ENCODE measurements at regions of chr1 and their contacts with region 1.

Region 1: DNA sequence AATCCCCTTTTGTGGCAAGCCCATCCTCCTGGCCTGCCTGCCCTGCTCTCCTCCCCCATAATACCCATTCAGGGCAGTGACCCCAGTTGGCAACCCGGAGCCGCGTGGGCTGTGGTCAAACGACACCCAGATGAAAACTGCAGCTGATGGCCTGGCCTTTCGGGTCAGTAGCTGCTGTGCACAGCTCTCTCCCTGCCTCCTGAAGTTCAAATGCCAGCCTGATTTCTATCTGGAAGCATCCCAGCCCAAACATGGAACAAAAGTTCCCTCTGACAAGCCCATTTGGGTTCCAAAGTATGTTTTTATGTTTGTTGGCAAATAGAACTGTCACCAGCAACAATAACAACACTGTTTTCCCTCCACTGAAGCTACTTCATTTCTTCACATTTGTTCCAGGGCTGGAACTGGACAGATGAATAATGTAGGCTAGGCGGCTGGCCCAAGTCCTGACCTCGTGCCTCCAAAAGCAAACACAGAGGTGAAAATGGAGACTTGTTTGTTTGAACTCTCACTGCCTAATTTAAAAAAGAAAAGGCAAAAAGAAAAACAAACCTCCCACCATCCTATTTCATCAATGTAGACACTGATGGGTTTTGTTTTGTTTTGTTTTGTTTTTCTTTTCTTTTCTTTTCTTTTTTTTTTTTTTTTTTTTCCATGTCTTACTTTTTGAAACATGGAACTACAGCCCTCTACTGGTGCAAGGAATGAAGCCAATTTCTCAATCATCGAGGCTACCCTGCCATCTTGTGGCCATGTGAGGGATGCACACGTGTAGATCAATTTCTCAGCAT is 179.0 kb downstream of the ADSS2 start:
- DNase-seq: peak; percentile 87
- ATAC-seq: peak; percentile 98
- H3K4me3 ChIP-seq: no peak overlapping the region
- H3K4me3 Mint-ChIP-seq: no peak overlapping the region
- H3K27ac ChIP-seq: no peak overlapping the region
- H3K27ac Mint-ChIP-seq: no peak overlapping the region
- H3K4me1 ChIP-seq: peaks cover 7 to 10% of the 10 kb centered on the region in 2 donors
- H3K4me1 Mint-ChIP-seq: peaks cover 15% of the 10 kb centered on the region
- H3K27me3 ChIP-seq: no peaks in the 10 kb centered on the region
- H3K27me3 Mint-ChIP-seq: no peaks in the 10 kb centered on the region
- CTCF ChIP-seq: peak; percentile 99

Region 2: DNA sequence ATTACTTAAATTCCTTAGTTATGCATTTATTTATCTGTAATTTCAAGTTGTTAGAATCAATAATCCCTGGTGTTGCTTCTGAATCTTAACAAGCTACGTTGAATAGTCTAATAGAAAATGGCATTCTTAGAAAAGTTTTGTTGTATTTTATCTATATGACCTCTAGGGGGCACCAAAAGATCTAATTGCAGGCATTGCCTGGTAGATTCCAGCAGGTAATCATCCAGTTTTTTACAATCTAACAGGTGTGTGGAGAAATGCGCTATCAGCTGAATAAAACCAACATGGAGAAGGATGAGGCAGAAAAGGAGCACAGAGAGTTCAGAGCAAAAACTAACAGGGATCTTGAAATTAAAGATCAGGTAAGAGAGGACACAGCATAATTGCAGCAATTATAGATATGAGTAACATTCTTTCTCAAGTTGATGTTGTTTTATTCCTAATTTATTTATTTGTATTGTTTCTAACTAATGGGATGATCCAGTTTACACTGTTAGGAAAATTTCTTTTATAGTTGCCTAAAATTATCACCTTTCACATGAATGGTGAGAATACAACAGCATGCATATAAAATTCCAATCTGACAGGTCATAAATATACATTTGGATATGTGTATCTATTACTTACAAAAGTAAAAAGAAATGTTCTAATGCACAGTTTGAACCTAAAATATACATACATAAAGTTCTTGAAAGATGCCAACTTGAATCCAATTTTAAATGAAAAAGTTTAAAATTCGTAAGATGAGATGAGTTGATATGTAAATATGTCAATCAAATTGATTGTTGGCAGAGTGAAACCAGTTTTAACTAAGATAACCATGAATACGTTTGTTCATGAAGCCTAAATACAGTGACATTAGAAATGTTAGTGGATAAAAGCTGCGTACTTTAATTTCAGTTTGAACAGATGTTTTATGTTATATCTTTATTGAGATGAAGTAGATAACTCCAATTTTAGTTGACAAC is 928.4 kb before region 1 on chr1:
- CTCF ChIA-PET with region 1: interaction called, 67 read pairs
- POLR2A ChIA-PET with region 1: interaction called, 4 read pairs
- intact Hi-C with region 1: loop called (anchors 1 kb)
- DNase-seq: peak; percentile 68
- ATAC-seq: peak; percentile 21
- H3K4me3 ChIP-seq: no peak overlapping the region
- H3K4me3 Mint-ChIP-seq: no peak overlapping the region
- H3K27ac ChIP-seq: no peak overlapping the region
- H3K27ac Mint-ChIP-seq: no peak overlapping the region
- H3K4me1 ChIP-seq: no peaks in the 10 kb centered on the region
- H3K4me1 Mint-ChIP-seq: no peaks in the 10 kb centered on the region
- H3K27me3 ChIP-seq: no peaks in the 10 kb centered on the region
- H3K27me3 Mint-ChIP-seq: no peaks in the 10 kb centered on the region
- CTCF ChIP-seq: peak; percentile 93

Region 3: DNA sequence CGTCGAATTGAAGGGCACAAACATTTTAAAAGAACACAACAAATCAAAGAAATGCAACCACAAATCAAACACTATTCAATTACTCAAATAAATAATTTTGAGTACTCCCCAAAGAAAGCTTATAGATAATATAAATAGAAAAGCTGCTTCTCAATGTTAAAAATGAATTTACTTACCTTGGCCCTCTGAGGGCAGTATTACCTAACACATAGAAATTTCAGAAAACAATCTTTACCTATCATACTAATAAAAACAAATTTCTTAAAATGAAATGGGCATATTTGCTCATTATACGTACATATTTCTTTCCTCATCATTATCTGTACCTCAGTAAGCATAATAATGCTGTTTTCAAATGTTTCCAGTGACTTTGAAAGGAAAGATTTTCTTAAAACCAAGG is 564.5 kb before region 1 on chr1:
- CTCF ChIA-PET with region 1: interaction called, 8 read pairs
- POLR2A ChIA-PET with region 1: no interaction called
- intact Hi-C with region 1: loop called (anchors 1 kb)
- DNase-seq: peak; percentile 33
- ATAC-seq: no peak
- H3K4me3 ChIP-seq: no peak overlapping the region
- H3K4me3 Mint-ChIP-seq: no peak overlapping the region
- H3K27ac ChIP-seq: no peak overlapping the region
- H3K27ac Mint-ChIP-seq: no peak overlapping the region
- H3K4me1 ChIP-seq: peaks cover 0 to 3% of the 10 kb centered on the region in 2 donors
- H3K4me1 Mint-ChIP-seq: peaks cover 10% of the 10 kb centered on the region
- H3K27me3 ChIP-seq: no peaks in the 10 kb centered on the region
- H3K27me3 Mint-ChIP-seq: no peaks in the 10 kb centered on the region
- CTCF ChIP-seq: peak; percentile 73

Region 4: DNA sequence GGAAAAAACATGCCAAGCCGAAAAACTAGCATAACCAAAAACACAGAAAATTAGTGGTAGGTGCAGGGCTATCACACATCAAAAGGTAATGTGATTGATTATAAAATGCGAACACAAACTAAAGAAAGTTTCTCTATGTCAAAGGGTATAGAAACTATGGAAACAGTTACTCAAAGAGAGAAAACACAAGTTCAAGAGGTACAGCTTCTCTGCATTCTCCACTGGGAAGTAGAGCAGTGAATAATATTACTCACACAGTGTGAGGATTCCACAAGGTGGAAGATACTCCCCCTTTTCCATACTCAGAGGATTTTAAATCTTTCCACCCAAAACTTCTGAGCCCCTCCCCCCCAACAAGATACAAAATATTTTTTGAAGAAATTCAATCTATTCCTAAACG is 441.2 kb before region 1 on chr1:
- CTCF ChIA-PET with region 1: no interaction called
- POLR2A ChIA-PET with region 1: no interaction called
- intact Hi-C with region 1: no loop called
- DNase-seq: no peak
- ATAC-seq: no peak
- H3K4me3 ChIP-seq: no peak overlapping the region
- H3K4me3 Mint-ChIP-seq: no peak overlapping the region
- H3K27ac ChIP-seq: no peak overlapping the region
- H3K27ac Mint-ChIP-seq: no peak overlapping the region
- H3K4me1 ChIP-seq: no peaks in the 10 kb centered on the region
- H3K4me1 Mint-ChIP-seq: peaks cover 11% of the 10 kb centered on the region
- H3K27me3 ChIP-seq: no peaks in the 10 kb centered on the region
- H3K27me3 Mint-ChIP-seq: no peaks in the 10 kb centered on the region
- CTCF ChIP-seq: no peak

Region 5: GRCh38 chr1:243850452-243851256 is 422.0 kb before region 1 on chr1:
- CTCF ChIA-PET with region 1: interaction called, 4 read pairs
- POLR2A ChIA-PET with region 1: no interaction called
- intact Hi-C with region 1: loop called (anchors 2 kb)
- DNase-seq: peak; percentile 88
- ATAC-seq: peak; percentile 45
- H3K4me3 ChIP-seq: peak overlapping the region; percentile 70 to 82 (median 76)
- H3K4me3 Mint-ChIP-seq: peak overlapping the region; percentile 92
- H3K27ac ChIP-seq: peak overlapping the region; percentile 87 to 98
- H3K27ac Mint-ChIP-seq: peak overlapping the region; percentile 96
- H3K4me1 ChIP-seq: peaks cover 13 to 14% of the 10 kb centered on the region in 2 donors
- H3K4me1 Mint-ChIP-seq: peaks cover 35% of the 10 kb centered on the region
- H3K27me3 ChIP-seq: peaks cover 0 to 3% (median 0%) of the 10 kb centered on the region in 4 experiments
- H3K27me3 Mint-ChIP-seq: peaks cover 15% of the 10 kb centered on the region
- CTCF ChIP-seq: no peak

Region 6: DNA sequence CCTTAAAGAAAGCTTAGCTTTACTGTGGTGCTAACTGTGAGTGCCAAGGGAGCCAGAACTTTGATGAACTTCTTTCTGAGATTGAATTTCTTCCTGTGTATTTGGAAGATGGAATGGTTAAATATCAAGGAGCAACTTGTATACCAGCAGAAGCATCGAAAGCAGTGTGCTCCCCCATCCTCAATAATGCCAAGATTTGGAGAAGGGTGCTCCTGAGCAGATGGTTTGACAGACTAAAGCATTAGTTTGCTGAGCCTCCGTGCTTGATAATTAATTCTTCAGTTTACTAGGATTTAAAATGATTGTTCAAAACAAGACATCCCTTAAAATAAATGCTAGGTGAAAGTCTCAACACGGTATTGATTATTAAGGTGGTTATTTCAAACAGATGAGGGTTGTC is 380.2 kb before region 1 on chr1:
- CTCF ChIA-PET with region 1: no interaction called
- POLR2A ChIA-PET with region 1: no interaction called
- intact Hi-C with region 1: no loop called
- DNase-seq: no peak
- ATAC-seq: no peak
- H3K4me3 ChIP-seq: no peak overlapping the region
- H3K4me3 Mint-ChIP-seq: no peak overlapping the region
- H3K27ac ChIP-seq: no peak overlapping the region
- H3K27ac Mint-ChIP-seq: no peak overlapping the region
- H3K4me1 ChIP-seq: no peaks in the 10 kb centered on the region
- H3K4me1 Mint-ChIP-seq: no peaks in the 10 kb centered on the region
- H3K27me3 ChIP-seq: peaks cover 0 to 5% (median 0%) of the 10 kb centered on the region in 4 experiments
- H3K27me3 Mint-ChIP-seq: peaks cover 42% of the 10 kb centered on the region
- CTCF ChIP-seq: no peak

Region 7: DNA sequence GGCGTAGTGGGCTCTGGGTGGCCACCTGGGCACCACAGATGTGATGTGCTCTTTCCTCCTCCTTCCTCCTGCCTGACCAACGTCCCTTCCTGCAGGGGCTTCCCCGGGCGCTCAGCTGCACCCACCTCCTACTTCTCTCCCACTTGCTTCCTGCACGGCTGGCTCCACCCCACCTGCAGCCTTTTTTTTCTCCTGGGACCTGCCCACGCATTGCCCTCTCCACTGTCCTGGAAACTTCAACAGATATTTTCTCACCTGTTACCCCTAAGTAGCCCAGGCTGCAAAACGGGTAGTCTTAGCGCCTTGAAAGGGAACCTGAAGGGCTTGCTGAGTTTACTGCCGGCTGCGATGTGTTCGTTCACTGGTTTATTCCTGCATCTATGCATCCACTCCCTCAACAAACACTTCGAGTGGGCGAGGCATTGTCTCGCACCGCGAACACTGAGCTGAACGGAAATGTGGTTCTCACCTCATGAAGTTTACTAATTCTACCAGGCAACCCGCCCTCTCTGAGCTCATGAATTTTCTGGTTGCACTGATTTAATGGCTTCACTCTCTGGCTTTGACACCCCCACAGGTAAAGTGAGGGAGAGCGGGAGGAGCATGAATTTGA is 198.0 kb before region 1 on chr1:
- CTCF ChIA-PET with region 1: interaction called, 3 read pairs
- POLR2A ChIA-PET with region 1: no interaction called
- intact Hi-C with region 1: loop called (anchors 2 kb)
- DNase-seq: peak; percentile 79
- ATAC-seq: peak; percentile 72
- H3K4me3 ChIP-seq: peak overlapping the region; percentile 32 to 59 (median 52)
- H3K4me3 Mint-ChIP-seq: peak overlapping the region; percentile 87
- H3K27ac ChIP-seq: peak overlapping the region; percentile 78 to 81
- H3K27ac Mint-ChIP-seq: peak overlapping the region; percentile 94
- H3K4me1 ChIP-seq: peaks cover 52 to 56% of the 10 kb centered on the region in 2 donors
- H3K4me1 Mint-ChIP-seq: peaks cover 52% of the 10 kb centered on the region
- H3K27me3 ChIP-seq: no peaks in the 10 kb centered on the region
- H3K27me3 Mint-ChIP-seq: no peaks in the 10 kb centered on the region
- CTCF ChIP-seq: no peak

Region 8: DNA sequence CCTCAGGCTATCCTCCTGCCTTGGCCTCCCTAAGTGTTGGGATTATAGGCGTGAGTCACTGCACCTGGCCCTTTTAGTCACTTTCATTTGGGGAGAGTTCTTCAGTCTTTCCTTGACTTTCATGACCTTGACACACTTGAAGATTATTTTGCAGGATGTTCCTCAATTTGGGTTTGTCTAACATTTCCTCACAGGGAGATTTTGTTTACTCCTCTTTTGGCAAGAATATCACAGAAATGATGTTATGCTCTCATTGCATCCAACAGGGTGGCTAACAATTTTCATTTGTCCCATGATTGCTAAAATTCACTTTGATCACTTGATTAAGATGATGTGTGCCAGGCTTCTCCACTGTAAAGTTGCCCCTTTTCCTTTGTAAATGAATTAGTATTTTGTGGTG is 15.1 kb after region 1 on chr1:
- CTCF ChIA-PET with region 1: no interaction called
- POLR2A ChIA-PET with region 1: no interaction called
- intact Hi-C with region 1: no loop called
- DNase-seq: no peak
- ATAC-seq: no peak
- H3K4me3 ChIP-seq: no peak overlapping the region
- H3K4me3 Mint-ChIP-seq: no peak overlapping the region
- H3K27ac ChIP-seq: no peak overlapping the region
- H3K27ac Mint-ChIP-seq: no peak overlapping the region
- H3K4me1 ChIP-seq: no peaks in the 10 kb centered on the region
- H3K4me1 Mint-ChIP-seq: no peaks in the 10 kb centered on the region
- H3K27me3 ChIP-seq: no peaks in the 10 kb centered on the region
- H3K27me3 Mint-ChIP-seq: peaks cover 3% of the 10 kb centered on the region
- CTCF ChIP-seq: no peak

Region 9: GRCh38 chr1:244302889-244303613 is 30.4 kb after region 1 on chr1:
- CTCF ChIA-PET with region 1: interaction called, 32 read pairs
- POLR2A ChIA-PET with region 1: no interaction called
- intact Hi-C with region 1: loop called (anchors 1 kb)
- DNase-seq: no peak
- ATAC-seq: no peak
- H3K4me3 ChIP-seq: no peak overlapping the region
- H3K4me3 Mint-ChIP-seq: no peak overlapping the region
- H3K27ac ChIP-seq: no peak overlapping the region
- H3K27ac Mint-ChIP-seq: no peak overlapping the region
- H3K4me1 ChIP-seq: peaks cover 4 to 17% of the 10 kb centered on the region in 2 donors
- H3K4me1 Mint-ChIP-seq: peaks cover 10% of the 10 kb centered on the region
- H3K27me3 ChIP-seq: no peaks in the 10 kb centered on the region
- H3K27me3 Mint-ChIP-seq: no peaks in the 10 kb centered on the region
- CTCF ChIP-seq: no peak

Region 10: DNA sequence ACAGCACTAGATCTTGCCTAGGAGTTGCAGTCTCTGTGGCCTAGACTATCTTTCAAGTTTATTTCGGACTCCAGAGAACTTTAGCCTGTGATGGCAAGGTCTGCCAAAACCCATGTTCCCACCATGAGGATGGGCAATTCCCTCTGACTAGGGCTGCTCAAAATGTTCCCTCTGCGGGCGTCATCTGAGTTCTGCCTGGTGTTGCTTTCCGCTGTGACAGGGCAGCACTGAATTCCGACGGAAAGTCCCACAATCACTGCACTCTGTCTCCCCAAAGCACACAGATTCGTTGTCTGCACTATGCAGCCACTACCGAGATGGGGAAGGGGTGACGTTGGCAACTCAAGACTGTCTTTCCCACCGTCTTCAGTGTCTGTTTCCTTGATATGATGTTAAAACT is 263.6 kb after region 1 on chr1:
- CTCF ChIA-PET with region 1: no interaction called
- POLR2A ChIA-PET with region 1: no interaction called
- intact Hi-C with region 1: no loop called
- DNase-seq: no peak
- ATAC-seq: no peak
- H3K4me3 ChIP-seq: no peak overlapping the region
- H3K4me3 Mint-ChIP-seq: no peak overlapping the region
- H3K27ac ChIP-seq: no peak overlapping the region
- H3K27ac Mint-ChIP-seq: no peak overlapping the region
- H3K4me1 ChIP-seq: no peaks in the 10 kb centered on the region
- H3K4me1 Mint-ChIP-seq: no peaks in the 10 kb centered on the region
- H3K27me3 ChIP-seq: no peaks in the 10 kb centered on the region
- H3K27me3 Mint-ChIP-seq: no peaks in the 10 kb centered on the region
- CTCF ChIP-seq: no peak

Measured in B cell (primary cell).